ENCODE measurements at regions of chr22 and their contacts with region 1.

Region 1: GRCh38 chr22:35840302-35840739 is 122.6 kb downstream of the APOL5 start:
- DNase-seq: peak; percentile 97
- H3K4me3 Mint-ChIP-seq: peak overlapping the region; percentile 84
- H3K27ac Mint-ChIP-seq: peak overlapping the region; percentile 83
- H3K4me1 Mint-ChIP-seq: peaks cover 55% of the 10 kb centered on the region
- H3K27me3 Mint-ChIP-seq: no peaks in the 10 kb centered on the region
- CTCF ChIP-seq: no peak

Region 2: DNA sequence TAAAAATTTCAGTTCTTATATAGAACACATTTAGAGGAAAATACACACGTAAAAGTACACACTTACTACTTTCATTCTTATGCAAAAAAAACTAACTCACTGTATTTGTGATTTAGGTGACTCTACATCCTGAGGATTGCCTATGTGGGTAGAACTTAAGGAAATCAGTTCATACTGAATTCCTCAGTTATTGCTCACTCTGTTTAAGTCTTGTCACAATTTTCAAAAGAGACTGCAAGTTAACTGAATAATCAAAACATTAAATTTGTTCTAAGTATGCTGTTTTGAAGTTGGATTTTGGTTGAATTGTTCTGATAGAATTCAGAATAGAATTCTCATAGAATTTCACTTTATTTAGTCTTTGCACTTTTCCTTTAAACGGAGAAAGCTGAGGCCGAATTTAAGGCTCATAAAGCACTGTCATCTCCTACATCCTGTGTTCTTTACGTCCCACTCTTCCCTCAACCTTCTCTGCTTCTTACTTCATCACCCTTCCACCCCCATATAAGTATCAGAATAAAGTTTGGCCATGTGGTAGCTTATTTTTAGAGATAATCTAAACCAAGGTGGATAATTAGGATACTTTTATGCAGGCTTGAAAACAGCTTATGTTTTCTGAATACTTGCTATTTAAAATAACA is 62.9 kb before region 1 on chr22:
- CTCF ChIA-PET with region 1: interaction called, 3 read pairs
- POLR2A ChIA-PET with region 1: interaction called, 11 read pairs
- intact Hi-C with region 1: no loop called
- DNase-seq: peak; percentile 51
- H3K4me3 Mint-ChIP-seq: peak overlapping the region; percentile 6
- H3K27ac Mint-ChIP-seq: peak overlapping the region; percentile 83
- H3K4me1 Mint-ChIP-seq: peaks cover 7% of the 10 kb centered on the region
- H3K27me3 Mint-ChIP-seq: no peaks in the 10 kb centered on the region
- CTCF ChIP-seq: no peak

Region 3: DNA sequence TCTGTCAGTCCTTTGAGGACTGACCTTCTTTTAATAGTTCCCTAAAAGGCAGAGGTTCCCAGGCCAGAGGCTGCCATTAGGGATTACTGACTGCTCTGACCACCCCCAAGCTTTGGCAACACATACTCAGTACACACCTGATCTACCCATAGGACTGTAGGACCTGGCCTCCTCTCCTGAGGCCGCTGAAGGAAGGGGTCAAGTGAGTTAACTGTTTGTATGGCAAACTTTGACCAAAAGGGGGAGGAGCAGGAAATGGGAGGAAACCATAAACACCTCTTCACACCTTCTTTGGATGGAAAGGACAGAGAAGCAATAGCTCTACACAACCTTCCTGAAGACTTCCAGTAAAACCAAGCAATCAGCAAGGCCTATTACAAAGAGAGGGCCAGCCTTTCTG is 18.7 kb before region 1 on chr22:
- CTCF ChIA-PET with region 1: interaction called, 6 read pairs
- POLR2A ChIA-PET with region 1: interaction called, 10 read pairs
- intact Hi-C with region 1: no loop called
- DNase-seq: no peak
- H3K4me3 Mint-ChIP-seq: no peak overlapping the region
- H3K27ac Mint-ChIP-seq: no peak overlapping the region
- H3K4me1 Mint-ChIP-seq: peaks cover 38% of the 10 kb centered on the region
- H3K27me3 Mint-ChIP-seq: no peaks in the 10 kb centered on the region
- CTCF ChIP-seq: no peak

Region 4: GRCh38 chr22:35900483-35901168 is 60.3 kb after region 1 on chr22:
- CTCF ChIA-PET with region 1: interaction called, 14 read pairs
- POLR2A ChIA-PET with region 1: interaction called, 155 read pairs
- intact Hi-C with region 1: loop called (anchors 1 kb)
- DNase-seq: peak; percentile 54
- H3K4me3 Mint-ChIP-seq: no peak overlapping the region
- H3K27ac Mint-ChIP-seq: peak overlapping the region; percentile 25
- H3K4me1 Mint-ChIP-seq: peaks cover 43% of the 10 kb centered on the region
- H3K27me3 Mint-ChIP-seq: no peaks in the 10 kb centered on the region
- CTCF ChIP-seq: no peak

Region 5: GRCh38 chr22:35921777-35922176 is 81.5 kb after region 1 on chr22:
- CTCF ChIA-PET with region 1: interaction called, 27 read pairs
- POLR2A ChIA-PET with region 1: interaction called, 247 read pairs
- intact Hi-C with region 1: loop called (anchors 1 kb)
- DNase-seq: peak; percentile 93
- H3K4me3 Mint-ChIP-seq: no peak overlapping the region
- H3K27ac Mint-ChIP-seq: no peak overlapping the region
- H3K4me1 Mint-ChIP-seq: peaks cover 27% of the 10 kb centered on the region
- H3K27me3 Mint-ChIP-seq: no peaks in the 10 kb centered on the region
- CTCF ChIP-seq: peak; percentile 72

Region 6: GRCh38 chr22:36081023-36081431 is 240.7 kb after region 1 on chr22:
- CTCF ChIA-PET with region 1: no interaction called
- POLR2A ChIA-PET with region 1: no interaction called
- intact Hi-C with region 1: no loop called
- DNase-seq: no peak
- H3K4me3 Mint-ChIP-seq: no peak overlapping the region
- H3K27ac Mint-ChIP-seq: no peak overlapping the region
- H3K4me1 Mint-ChIP-seq: peaks cover 5% of the 10 kb centered on the region
- H3K27me3 Mint-ChIP-seq: no peaks in the 10 kb centered on the region
- CTCF ChIP-seq: no peak

Region 7: DNA sequence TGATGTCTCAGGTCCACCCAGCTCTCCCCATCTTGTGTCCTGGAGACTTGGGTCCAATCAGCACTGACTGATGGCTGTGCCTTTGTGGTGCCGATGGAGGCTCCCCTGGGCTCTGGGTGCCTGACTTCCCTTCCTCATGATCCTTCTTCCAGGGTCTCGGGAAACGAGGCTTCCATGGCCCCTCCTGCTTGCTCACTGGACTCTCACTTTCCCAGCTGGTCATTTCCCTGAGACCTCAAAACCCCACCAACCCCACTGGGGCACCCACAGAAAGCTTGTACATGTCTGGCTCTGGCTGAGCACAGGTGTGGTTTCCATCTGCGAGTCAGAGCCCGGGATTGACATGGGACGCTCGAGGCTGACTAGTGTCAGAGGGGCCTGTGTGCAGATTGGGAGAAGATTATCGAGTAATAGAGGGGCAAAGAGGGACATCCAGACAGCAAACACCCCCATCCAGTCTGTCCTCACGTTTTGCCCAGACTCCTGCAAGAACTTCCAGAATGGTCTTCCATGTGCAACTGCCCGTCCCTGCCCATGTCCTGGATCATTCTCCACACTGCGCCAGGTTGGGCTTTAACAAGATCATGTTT is 427.7 kb after region 1 on chr22:
- CTCF ChIA-PET with region 1: no interaction called
- POLR2A ChIA-PET with region 1: no interaction called
- intact Hi-C with region 1: no loop called
- DNase-seq: no peak
- H3K4me3 Mint-ChIP-seq: no peak overlapping the region
- H3K27ac Mint-ChIP-seq: no peak overlapping the region
- H3K4me1 Mint-ChIP-seq: peaks cover 11% of the 10 kb centered on the region
- H3K27me3 Mint-ChIP-seq: no peaks in the 10 kb centered on the region
- CTCF ChIP-seq: no peak